ENCODE measurements at regions of chr12 and their contacts with region 1.

Region 1: GRCh38 chr12:94374124-94374523 is 85.5 kb downstream of the CEP83 start:
- DNase-seq: no peak
- ATAC-seq: no peak
- H3K4me3 ChIP-seq: no peak overlapping the region
- H3K27ac ChIP-seq: no peak overlapping the region
- H3K4me1 ChIP-seq: no peaks in the 10 kb centered on the region
- H3K27me3 ChIP-seq: no peaks in the 10 kb centered on the region
- CTCF ChIP-seq: no peak

Region 2: DNA sequence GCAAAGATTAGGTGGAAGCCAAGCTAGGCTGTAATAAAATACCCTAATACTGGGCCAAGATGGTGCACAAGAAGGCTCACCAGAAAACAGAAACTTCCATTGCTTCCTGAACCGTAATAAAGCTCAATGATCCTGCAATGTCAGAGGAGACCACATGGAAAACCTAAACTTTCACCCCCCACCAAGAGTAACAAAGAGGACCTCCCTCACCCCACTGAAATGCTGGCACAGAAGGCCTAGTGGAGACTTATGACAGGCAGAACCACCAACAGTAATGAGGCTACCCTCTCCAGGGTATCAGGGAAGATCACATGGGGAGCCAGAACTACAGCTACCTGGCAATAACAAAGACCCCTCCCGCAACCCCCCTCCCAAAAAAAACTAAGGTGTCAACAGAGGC is 42.5 kb after region 1 on chr12:
- CTCF ChIA-PET with region 1: interaction called, 10 read pairs
- POLR2A ChIA-PET with region 1: no interaction called
- in situ Hi-C with region 1: no loop called
- intact Hi-C with region 1: no loop called
- DNase-seq: no peak
- ATAC-seq: no peak
- H3K4me3 ChIP-seq: no peak overlapping the region
- H3K27ac ChIP-seq: no peak overlapping the region
- H3K4me1 ChIP-seq: no peaks in the 10 kb centered on the region
- H3K27me3 ChIP-seq: no peaks in the 10 kb centered on the region
- CTCF ChIP-seq: no peak

Measured in Panc1 (cell line).